ENCODE measurements at regions of chr1 and their contacts with region 1.

Region 1: DNA sequence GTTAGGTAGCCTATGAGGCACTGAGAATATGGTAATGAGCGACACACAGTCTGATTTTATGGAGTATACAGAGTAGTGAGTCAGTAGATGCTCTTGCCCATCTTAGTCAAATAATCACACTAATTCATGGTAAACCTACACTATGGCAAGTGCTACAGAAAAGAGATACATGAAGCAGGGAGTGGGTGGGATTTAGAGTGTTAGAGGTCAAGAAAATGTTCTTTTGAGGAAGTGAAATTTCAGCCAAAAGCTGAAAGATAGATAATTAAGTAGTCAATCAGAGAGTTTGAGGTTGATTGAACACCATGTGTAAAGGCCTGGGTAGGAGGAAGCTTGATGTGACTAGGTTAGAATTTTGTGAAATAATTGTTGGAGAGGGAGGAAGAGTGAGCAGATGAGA is 14.7 kb downstream of the MDM4 start:
- DNase-seq: no peak
- ATAC-seq: no peak
- H3K4me3 ChIP-seq: no peak overlapping the region
- H3K27ac ChIP-seq: no peak overlapping the region
- H3K4me1 ChIP-seq: peaks cover 9% of the 10 kb centered on the region
- H3K27me3 ChIP-seq: no peaks in the 10 kb centered on the region
- CTCF ChIP-seq: no peak

Region 2: GRCh38 chr1:203839059-203839458 is 691.9 kb before region 1 on chr1:
- intact Hi-C with region 1: loop called in 1 of 2 experiments (anchors 10 kb)
- DNase-seq: no peak
- ATAC-seq: no peak
- H3K4me3 ChIP-seq: no peak overlapping the region
- H3K27ac ChIP-seq: no peak overlapping the region
- H3K4me1 ChIP-seq: peaks cover 7% of the 10 kb centered on the region
- H3K27me3 ChIP-seq: no peaks in the 10 kb centered on the region
- CTCF ChIP-seq: no peak

Region 3: DNA sequence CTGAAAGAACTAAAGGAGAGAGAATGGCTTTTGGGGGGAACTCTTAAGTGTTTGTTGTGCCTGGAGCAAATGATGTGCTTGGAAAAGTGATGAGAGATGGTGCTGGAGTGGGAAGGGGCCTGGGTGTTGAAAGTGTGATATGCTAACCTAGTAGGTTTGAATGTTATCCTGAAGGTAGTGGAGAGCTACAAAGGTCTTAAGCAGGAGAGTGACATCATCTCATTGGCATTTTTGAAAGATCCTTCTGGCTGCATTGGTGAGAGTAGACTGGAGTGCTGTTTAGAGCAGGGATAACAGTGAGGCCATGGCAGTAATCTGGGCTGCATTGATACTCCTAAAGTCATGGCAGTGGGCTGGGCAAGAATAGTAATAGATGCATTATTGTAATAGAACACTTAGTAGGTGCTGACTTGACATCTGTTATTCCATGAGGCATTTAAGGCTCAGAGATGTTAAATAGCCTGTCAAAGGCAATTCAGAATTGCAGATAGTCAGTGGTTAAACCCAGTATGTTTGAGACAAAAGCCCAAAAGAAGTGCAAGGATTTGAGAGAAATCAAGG is 29.7 kb after region 1 on chr1:
- intact Hi-C with region 1: no loop called
- DNase-seq: no peak
- ATAC-seq: peak in 2 of 4 donors; percentile 29 to 56
- H3K4me3 ChIP-seq: no peak overlapping the region
- H3K27ac ChIP-seq: no peak overlapping the region
- H3K4me1 ChIP-seq: no peaks in the 10 kb centered on the region
- H3K27me3 ChIP-seq: no peaks in the 10 kb centered on the region
- CTCF ChIP-seq: no peak

Region 4: GRCh38 chr1:204736836-204737387 is 206.0 kb after region 1 on chr1:
- intact Hi-C with region 1: no loop called
- DNase-seq: no peak
- ATAC-seq: no peak
- H3K4me3 ChIP-seq: no peak overlapping the region
- H3K27ac ChIP-seq: no peak overlapping the region
- H3K4me1 ChIP-seq: no peaks in the 10 kb centered on the region
- H3K27me3 ChIP-seq: peaks cover 0 to 16% (median 2%) of the 10 kb centered on the region in 3 donors
- CTCF ChIP-seq: no peak

Region 5: DNA sequence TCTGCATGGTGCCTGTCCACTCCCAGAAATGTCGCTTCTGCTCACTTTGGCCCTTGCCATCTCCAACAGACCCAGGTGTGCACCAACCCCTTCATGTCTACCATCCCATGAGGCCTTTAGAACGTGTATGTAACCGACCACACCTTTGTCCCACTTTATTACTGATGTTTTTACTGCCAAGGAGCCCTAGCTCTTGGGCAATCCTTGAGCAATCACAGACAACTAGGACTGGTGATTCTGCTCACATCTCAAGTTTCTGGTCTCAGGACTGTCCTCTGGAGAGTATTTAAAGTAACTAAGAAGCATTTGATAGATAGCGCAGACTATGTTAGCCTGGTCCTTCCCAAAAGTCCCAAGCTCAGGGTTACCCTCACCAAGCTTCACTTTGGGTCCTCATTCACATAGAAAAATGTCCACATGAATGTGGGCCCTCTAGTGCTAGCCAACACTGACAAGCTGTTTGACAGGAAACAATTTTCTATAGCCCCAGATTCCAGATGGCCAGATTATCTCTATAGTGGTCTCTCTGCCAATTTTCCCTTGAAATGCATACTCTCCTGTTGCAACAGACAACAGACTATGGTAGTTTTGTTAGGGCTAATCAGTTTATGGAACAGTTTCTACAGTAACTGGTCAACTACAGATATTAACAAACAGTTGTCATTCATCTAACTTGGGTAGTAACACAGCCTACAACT is 560.3 kb after region 1 on chr1:
- intact Hi-C with region 1: loop called in 1 of 2 experiments (anchors 10 kb)
- DNase-seq: no peak
- ATAC-seq: peak; percentile 92 to 99 (median 97)
- H3K4me3 ChIP-seq: no peak overlapping the region
- H3K27ac ChIP-seq: peak overlapping the region; percentile 76
- H3K4me1 ChIP-seq: peaks cover 19% of the 10 kb centered on the region
- H3K27me3 ChIP-seq: no peaks in the 10 kb centered on the region
- CTCF ChIP-seq: no peak

Measured in psoas muscle (tissue), 8 donors.